ENCODE measurements at regions of chr5 and their contacts with region 1.

Region 1: GRCh38 chr5:34898258-34898895 is 16.9 kb downstream of the RAD1 start:
- DNase-seq: peak; percentile 85
- H3K4me3 ChIP-seq: no peak overlapping the region
- H3K27ac ChIP-seq: no peak overlapping the region
- H3K4me1 ChIP-seq: peaks cover 7% of the 10 kb centered on the region
- H3K27me3 ChIP-seq: no peaks in the 10 kb centered on the region

Region 2: GRCh38 chr5:34007621-34008600 is 890.5 kb before region 1 on chr5 and contains the start of gene AMACR:
- in situ Hi-C with region 1: loop called (anchors 25 kb)
- DNase-seq: peak; percentile 95
- H3K4me3 ChIP-seq: peak within 1 kb of the TSS; percentile 83
- H3K27ac ChIP-seq: peak within 1 kb of the TSS; percentile 80
- H3K4me1 ChIP-seq: peaks cover 20% of the 10 kb centered on the region
- H3K27me3 ChIP-seq: no peaks in the 10 kb centered on the region
- total RNA-seq, gene AMACR: 22.3 and 22.5 TPM in 2 replicates

Region 3: GRCh38 chr5:34486160-34486848 is 412.1 kb before region 1 on chr5:
- in situ Hi-C with region 1: loop called (anchors 5 kb)
- DNase-seq: peak; percentile 90
- H3K4me3 ChIP-seq: no peak overlapping the region
- H3K27ac ChIP-seq: peak overlapping the region; percentile 31
- H3K4me1 ChIP-seq: peaks cover 47% of the 10 kb centered on the region
- H3K27me3 ChIP-seq: no peaks in the 10 kb centered on the region

Region 4: GRCh38 chr5:34721327-34721726 is 177.1 kb before region 1 on chr5:
- in situ Hi-C with region 1: no loop called
- DNase-seq: peak; percentile 65
- H3K4me3 ChIP-seq: no peak overlapping the region
- H3K27ac ChIP-seq: peak overlapping the region; percentile 24
- H3K4me1 ChIP-seq: peaks cover 30% of the 10 kb centered on the region
- H3K27me3 ChIP-seq: no peaks in the 10 kb centered on the region

Measured in GM23248 (cell line).